GM12878 (cell line): ENCODE measurements at regions of chr16 and their contacts with region 1.

Region 1: DNA sequence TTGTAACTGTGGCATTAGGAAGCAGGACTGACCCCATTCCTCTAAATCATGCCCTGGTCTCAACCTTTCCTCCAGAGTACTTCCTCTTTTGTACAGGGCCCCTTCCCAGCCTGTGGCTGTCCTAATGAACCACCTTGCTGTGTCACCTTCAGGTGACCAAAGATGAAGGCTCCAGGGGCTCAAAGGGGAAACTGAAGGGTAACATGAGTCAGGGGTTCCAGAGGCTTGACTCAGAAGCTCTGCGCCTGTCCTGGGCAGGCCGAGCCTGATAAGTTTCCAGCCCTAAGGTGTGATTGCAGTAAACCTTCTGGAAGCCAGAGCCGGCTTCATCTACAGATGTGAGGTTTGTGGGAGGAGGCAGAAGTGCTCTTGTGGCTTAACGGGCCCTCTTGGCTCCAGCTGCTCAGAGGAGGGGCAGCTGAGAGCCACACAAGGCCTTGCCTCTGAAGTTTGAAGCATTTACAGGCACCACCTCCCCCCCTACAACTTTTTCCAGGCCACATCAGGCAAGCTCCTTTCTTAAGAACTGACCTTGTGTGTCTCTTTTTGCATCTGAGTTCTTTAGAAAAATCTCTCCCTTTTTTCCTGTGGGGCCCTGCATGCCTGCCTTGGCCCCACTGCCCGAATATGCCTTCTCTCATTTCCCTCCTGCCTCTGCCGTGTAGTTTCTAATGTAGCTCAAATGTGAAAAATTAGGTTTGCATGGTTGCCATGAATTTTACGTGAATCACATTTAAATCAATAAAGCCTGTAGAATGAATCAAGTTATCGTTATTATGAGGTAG is 149.9 kb downstream of the CLEC16A start:
- DNase-seq: peak; percentile 53
- ATAC-seq: peak; percentile 86
- H3K4me3 ChIP-seq: 0 out of 2 replicates have a peak overlapping the region, but pooled peaks have one; percentile 18
- H3K27ac ChIP-seq: peak overlapping the region; percentile 80
- H3K4me1 ChIP-seq: peaks cover 54% of the 10 kb centered on the region
- H3K27me3 ChIP-seq: no peaks in the 10 kb centered on the region
- CTCF ChIP-seq: no peak
- EP300 ChIP-seq: 0 out of 4 replicates have a peak, but pooled peaks of 1 of the 2 experiments have one; percentile 39
- POLR2A ChIP-seq: no peak
- RAD21 ChIP-seq: no peak

Region 2: GRCh38 chr16:10981697-10982216 is 112.5 kb before region 1 on chr16:
- CTCF ChIA-PET with region 1: interaction called, 8 read pairs
- POLR2A ChIA-PET with region 1: interaction called, 4 read pairs
- RAD21 ChIA-PET with region 1: interaction called, 15 read pairs
- SMC1A ChIA-PET with region 1: interaction called, 4 read pairs
- in situ Hi-C with region 1: no loop called
- intact Hi-C with region 1: no loop called
- DNase-seq: no peak
- ATAC-seq: peak; percentile 94
- H3K4me3 ChIP-seq: no peak overlapping the region
- H3K27ac ChIP-seq: peak overlapping the region; percentile 55; the same call in 1 of the 2 replicates
- H3K4me1 ChIP-seq: peaks cover 20% of the 10 kb centered on the region
- H3K27me3 ChIP-seq: no peaks in the 10 kb centered on the region
- CTCF ChIP-seq: peak; percentile 78 to 85 (median 80)
- EP300 ChIP-seq: peak in 1 of 2 experiments; percentile 64; a peak in 1 of 4 replicates
- POLR2A ChIP-seq: no peak
- RAD21 ChIP-seq: peak; percentile 54

Region 3: GRCh38 chr16:11032922-11033291 is 61.4 kb before region 1 on chr16:
- CTCF ChIA-PET with region 1: no interaction called
- POLR2A ChIA-PET with region 1: no interaction called
- RAD21 ChIA-PET with region 1: no interaction called
- SMC1A ChIA-PET with region 1: no interaction called
- in situ Hi-C with region 1: no loop called
- intact Hi-C with region 1: no loop called
- DNase-seq: no peak
- ATAC-seq: no peak
- H3K4me3 ChIP-seq: no peak overlapping the region
- H3K27ac ChIP-seq: no peak overlapping the region
- H3K4me1 ChIP-seq: no peaks in the 10 kb centered on the region
- H3K27me3 ChIP-seq: no peaks in the 10 kb centered on the region
- CTCF ChIP-seq: no peak
- EP300 ChIP-seq: no peak
- POLR2A ChIP-seq: no peak
- RAD21 ChIP-seq: no peak

Region 4: GRCh38 chr16:11076259-11077018 is 17.8 kb before region 1 on chr16:
- CTCF ChIA-PET with region 1: interaction called, 16 read pairs
- POLR2A ChIA-PET with region 1: interaction called, 48 read pairs
- RAD21 ChIA-PET with region 1: interaction called, 26 read pairs
- SMC1A ChIA-PET with region 1: interaction called, 30 read pairs
- in situ Hi-C with region 1: no loop called
- intact Hi-C with region 1: no loop called
- DNase-seq: peak; percentile 79
- ATAC-seq: peak; percentile 64
- H3K4me3 ChIP-seq: no peak overlapping the region
- H3K27ac ChIP-seq: peak overlapping the region; percentile 65
- H3K4me1 ChIP-seq: peaks cover 46% of the 10 kb centered on the region
- H3K27me3 ChIP-seq: no peaks in the 10 kb centered on the region
- CTCF ChIP-seq: no peak
- EP300 ChIP-seq: 0 out of 4 replicates have a peak, but pooled peaks of 1 of the 2 experiments have one; percentile 10
- POLR2A ChIP-seq: no peak
- RAD21 ChIP-seq: no peak

Region 5: GRCh38 chr16:11082108-11082863 is 12.0 kb before region 1 on chr16:
- CTCF ChIA-PET with region 1: interaction called, 16 read pairs
- POLR2A ChIA-PET with region 1: interaction called, 48 read pairs
- RAD21 ChIA-PET with region 1: interaction called, 26 read pairs
- SMC1A ChIA-PET with region 1: interaction called, 30 read pairs
- in situ Hi-C with region 1: no loop called
- intact Hi-C with region 1: no loop called
- DNase-seq: no peak
- ATAC-seq: no peak
- H3K4me3 ChIP-seq: no peak overlapping the region
- H3K27ac ChIP-seq: no peak overlapping the region
- H3K4me1 ChIP-seq: peaks cover 28% of the 10 kb centered on the region
- H3K27me3 ChIP-seq: no peaks in the 10 kb centered on the region
- CTCF ChIP-seq: no peak
- EP300 ChIP-seq: no peak
- POLR2A ChIP-seq: no peak
- RAD21 ChIP-seq: no peak

Region 6: GRCh38 chr16:11105038-11105903 is 11.0 kb after region 1 on chr16:
- CTCF ChIA-PET with region 1: interaction called, 20 read pairs
- POLR2A ChIA-PET with region 1: interaction called, 19 read pairs
- RAD21 ChIA-PET with region 1: interaction called, 39 read pairs
- SMC1A ChIA-PET with region 1: interaction called, 68 read pairs
- in situ Hi-C with region 1: no loop called
- intact Hi-C with region 1: no loop called
- DNase-seq: peak; percentile 86
- ATAC-seq: peak; percentile 85
- H3K4me3 ChIP-seq: 0 out of 2 replicates have a peak overlapping the region, but pooled peaks have one; percentile 31
- H3K27ac ChIP-seq: peak overlapping the region; percentile 87
- H3K4me1 ChIP-seq: peaks cover 38% of the 10 kb centered on the region
- H3K27me3 ChIP-seq: no peaks in the 10 kb centered on the region
- CTCF ChIP-seq: no peak
- EP300 ChIP-seq: peak in 1 of 2 experiments; percentile 46; a peak in 1 of 4 replicates
- POLR2A ChIP-seq: peak; percentile 69
- RAD21 ChIP-seq: no peak

Region 7: GRCh38 chr16:11114366-11115164 is 20.3 kb after region 1 on chr16:
- CTCF ChIA-PET with region 1: interaction called, 3 read pairs
- POLR2A ChIA-PET with region 1: interaction called, 10 read pairs
- RAD21 ChIA-PET with region 1: interaction called, 19 read pairs
- SMC1A ChIA-PET with region 1: interaction called, 16 read pairs
- in situ Hi-C with region 1: no loop called
- intact Hi-C with region 1: no loop called
- DNase-seq: no peak
- ATAC-seq: no peak
- H3K4me3 ChIP-seq: no peak overlapping the region
- H3K27ac ChIP-seq: peak overlapping the region; percentile 52
- H3K4me1 ChIP-seq: peaks cover 39% of the 10 kb centered on the region
- H3K27me3 ChIP-seq: no peaks in the 10 kb centered on the region
- CTCF ChIP-seq: no peak
- EP300 ChIP-seq: no peak
- POLR2A ChIP-seq: no peak
- RAD21 ChIP-seq: no peak

Region 8: GRCh38 chr16:11152677-11153331 is 58.5 kb after region 1 on chr16:
- CTCF ChIA-PET with region 1: no interaction called
- POLR2A ChIA-PET with region 1: no interaction called
- RAD21 ChIA-PET with region 1: no interaction called
- SMC1A ChIA-PET with region 1: no interaction called
- in situ Hi-C with region 1: no loop called
- intact Hi-C with region 1: no loop called
- DNase-seq: no peak
- ATAC-seq: no peak
- H3K4me3 ChIP-seq: no peak overlapping the region
- H3K27ac ChIP-seq: no peak overlapping the region
- H3K4me1 ChIP-seq: peaks cover 7% of the 10 kb centered on the region
- H3K27me3 ChIP-seq: no peaks in the 10 kb centered on the region
- CTCF ChIP-seq: no peak
- EP300 ChIP-seq: no peak
- POLR2A ChIP-seq: no peak
- RAD21 ChIP-seq: no peak

Region 9: DNA sequence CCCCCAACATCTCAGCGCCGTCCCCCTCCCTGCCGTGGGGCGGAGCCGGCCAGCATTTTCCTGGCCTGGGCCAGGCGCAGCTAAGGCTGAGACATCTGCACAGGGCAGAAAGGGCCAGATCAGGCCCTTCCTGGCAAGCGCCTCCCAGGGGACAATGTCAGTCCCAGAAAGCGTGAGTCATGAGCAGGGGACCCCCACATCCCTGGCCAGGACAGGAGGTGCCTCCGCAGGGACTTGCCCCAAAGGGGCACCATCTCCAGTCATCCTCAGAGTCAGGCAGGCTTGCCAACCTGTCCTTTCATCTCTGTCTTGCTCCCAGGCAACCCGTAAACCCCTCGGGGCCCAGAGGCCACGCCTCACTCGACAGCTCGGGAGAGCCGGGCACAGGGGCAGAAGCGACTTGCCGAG is 118.5 kb after region 1 on chr16:
- CTCF ChIA-PET with region 1: no interaction called
- POLR2A ChIA-PET with region 1: no interaction called
- RAD21 ChIA-PET with region 1: no interaction called
- SMC1A ChIA-PET with region 1: no interaction called
- in situ Hi-C with region 1: no loop called
- intact Hi-C with region 1: no loop called
- DNase-seq: no peak
- ATAC-seq: peak; percentile 75
- H3K4me3 ChIP-seq: no peak overlapping the region
- H3K27ac ChIP-seq: no peak overlapping the region
- H3K4me1 ChIP-seq: peaks cover 28% of the 10 kb centered on the region
- H3K27me3 ChIP-seq: no peaks in the 10 kb centered on the region
- CTCF ChIP-seq: no peak
- EP300 ChIP-seq: no peak
- POLR2A ChIP-seq: no peak
- RAD21 ChIP-seq: no peak

Region 10: GRCh38 chr16:11224096-11224893 is 130.0 kb after region 1 on chr16:
- CTCF ChIA-PET with region 1: interaction called, 3 read pairs
- POLR2A ChIA-PET with region 1: interaction called, 3 read pairs
- RAD21 ChIA-PET with region 1: interaction called, 10 read pairs
- SMC1A ChIA-PET with region 1: interaction called, 8 read pairs
- in situ Hi-C with region 1: no loop called
- intact Hi-C with region 1: no loop called
- DNase-seq: peak; percentile 57
- ATAC-seq: peak; percentile 75
- H3K4me3 ChIP-seq: peak overlapping the region; percentile 19; the same call in 1 of the 2 replicates
- H3K27ac ChIP-seq: peak overlapping the region; percentile 94
- H3K4me1 ChIP-seq: peaks cover 28% of the 10 kb centered on the region
- H3K27me3 ChIP-seq: no peaks in the 10 kb centered on the region
- CTCF ChIP-seq: no peak
- EP300 ChIP-seq: no peak
- POLR2A ChIP-seq: peak; percentile 55
- RAD21 ChIP-seq: no peak